Sigmoid colon (tissue), 7 donors: ENCODE measurements at regions of chr20 and their contacts with region 1.

Region 1: GRCh38 chr20:47886460-47887041 is 101.3 kb upstream of the SULF2 start:
- DNase-seq: no peak
- H3K4me3 ChIP-seq: no peak overlapping the region
- H3K27ac ChIP-seq: no peak overlapping the region
- H3K4me1 ChIP-seq: no peaks in the 10 kb centered on the region
- H3K27me3 ChIP-seq: no peaks in the 10 kb centered on the region
- CTCF ChIP-seq: no peak
- EP300 ChIP-seq: no peak
- POLR2A ChIP-seq: no peak

Region 2: GRCh38 chr20:46174469-46175128 is 1712.0 kb before region 1 on chr20:
- intact Hi-C with region 1: no loop called
- DNase-seq: peak; percentile 72
- H3K4me3 ChIP-seq: no peak overlapping the region
- H3K27ac ChIP-seq: no peak overlapping the region
- H3K4me1 ChIP-seq: no peaks in the 10 kb centered on the region
- H3K27me3 ChIP-seq: peaks cover 21 to 69% (median 42%) of the 10 kb centered on the region in 3 donors
- CTCF ChIP-seq: peak in 2 of 4 experiments; percentile 23 to 57
- EP300 ChIP-seq: no peak
- POLR2A ChIP-seq: no peak

Region 3: GRCh38 chr20:48012197-48013085 is 125.9 kb after region 1 on chr20:
- intact Hi-C with region 1: no loop called
- DNase-seq: no peak
- H3K4me3 ChIP-seq: no peak overlapping the region
- H3K27ac ChIP-seq: no peak overlapping the region
- H3K4me1 ChIP-seq: peaks cover 0 to 6% (median 0%) of the 10 kb centered on the region in 4 donors
- H3K27me3 ChIP-seq: no peaks in the 10 kb centered on the region
- CTCF ChIP-seq: no peak
- EP300 ChIP-seq: no peak
- POLR2A ChIP-seq: no peak

Region 4: DNA sequence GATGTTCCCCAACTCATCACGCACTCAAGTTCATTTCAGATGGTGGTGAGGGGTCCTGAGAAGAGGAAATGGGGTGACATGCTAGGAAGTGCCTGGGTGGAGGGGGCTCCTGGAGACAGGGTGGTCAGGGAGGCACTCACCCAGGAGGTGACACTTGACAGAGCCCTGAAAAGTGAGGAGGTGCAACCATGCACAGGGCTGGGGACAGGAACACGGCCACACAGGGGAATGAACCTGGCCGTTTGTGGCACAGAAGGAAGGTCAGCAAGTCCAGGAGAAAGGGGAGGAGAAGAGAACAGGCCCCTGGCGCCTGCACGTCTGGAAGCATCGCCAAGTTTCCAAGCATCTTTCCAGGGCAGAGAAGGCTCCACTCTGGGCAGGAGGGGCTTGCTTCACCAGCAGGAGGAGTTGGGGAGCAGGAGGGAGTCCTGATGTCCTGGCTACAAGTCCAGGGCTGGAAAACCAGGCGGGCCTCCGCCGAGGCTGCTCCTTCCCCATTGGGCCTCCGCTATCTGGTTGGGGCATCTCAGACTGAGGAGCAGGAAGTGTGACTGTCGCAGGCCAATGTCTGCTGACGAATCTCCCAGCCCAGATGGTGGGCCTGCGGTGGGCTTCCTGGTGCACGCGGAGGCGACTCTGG is 519.2 kb after region 1 on chr20:
- intact Hi-C with region 1: no loop called
- DNase-seq: no peak
- H3K4me3 ChIP-seq: no peak overlapping the region
- H3K27ac ChIP-seq: no peak overlapping the region
- H3K4me1 ChIP-seq: no peaks in the 10 kb centered on the region
- H3K27me3 ChIP-seq: no peaks in the 10 kb centered on the region
- CTCF ChIP-seq: no peak
- EP300 ChIP-seq: no peak
- POLR2A ChIP-seq: no peak

Region 5: DNA sequence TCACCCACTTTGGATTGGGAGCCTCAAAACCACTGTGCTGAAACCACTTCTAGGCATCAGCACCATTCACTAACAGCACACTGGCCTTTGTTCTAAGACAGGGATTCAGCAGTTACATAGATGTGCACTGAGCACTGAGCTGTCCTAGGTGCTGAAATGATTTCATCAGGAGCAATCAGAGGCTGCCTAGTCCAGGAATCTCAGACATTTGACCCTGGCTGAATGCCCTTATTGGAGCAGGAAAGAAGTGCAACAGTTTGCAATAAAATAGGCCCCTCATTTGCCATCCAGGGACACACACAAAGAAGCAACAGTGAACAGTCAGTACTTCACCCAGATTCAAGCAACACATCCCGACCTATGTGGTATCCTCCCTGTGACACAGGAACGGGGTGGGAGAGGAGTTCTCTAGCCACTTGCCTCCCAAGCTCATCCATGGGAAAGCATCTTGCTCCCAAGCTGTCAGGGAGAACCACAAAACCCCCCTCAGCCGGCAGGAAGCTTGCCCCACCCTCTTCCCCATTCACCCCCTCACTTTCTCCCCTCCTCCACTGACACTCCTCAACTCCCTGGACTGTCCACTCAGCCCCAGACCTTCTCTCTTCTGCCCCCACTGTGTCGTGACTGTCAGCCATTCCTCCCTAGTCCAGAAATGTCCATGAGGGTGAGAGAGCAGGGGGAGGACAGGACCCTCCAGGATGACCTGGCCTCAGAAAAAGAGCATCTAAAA is 636.8 kb after region 1 on chr20:
- intact Hi-C with region 1: loop called (anchors 5 kb)
- DNase-seq: no peak
- H3K4me3 ChIP-seq: no peak overlapping the region
- H3K27ac ChIP-seq: no peak overlapping the region
- H3K4me1 ChIP-seq: no peaks in the 10 kb centered on the region
- H3K27me3 ChIP-seq: no peaks in the 10 kb centered on the region
- CTCF ChIP-seq: no peak
- EP300 ChIP-seq: no peak
- POLR2A ChIP-seq: no peak